ENCODE measurements at regions of chr1 and their contacts with region 1.

Region 1: GRCh38 chr1:212455803-212456528 is 23.2 kb downstream of the NENF start:
- H3K4me3 ChIP-seq: no peak overlapping the region
- H3K27ac ChIP-seq: no peak overlapping the region
- H3K4me1 ChIP-seq: no peaks in the 10 kb centered on the region
- CTCF ChIP-seq: peak; percentile 78

Region 2: DNA sequence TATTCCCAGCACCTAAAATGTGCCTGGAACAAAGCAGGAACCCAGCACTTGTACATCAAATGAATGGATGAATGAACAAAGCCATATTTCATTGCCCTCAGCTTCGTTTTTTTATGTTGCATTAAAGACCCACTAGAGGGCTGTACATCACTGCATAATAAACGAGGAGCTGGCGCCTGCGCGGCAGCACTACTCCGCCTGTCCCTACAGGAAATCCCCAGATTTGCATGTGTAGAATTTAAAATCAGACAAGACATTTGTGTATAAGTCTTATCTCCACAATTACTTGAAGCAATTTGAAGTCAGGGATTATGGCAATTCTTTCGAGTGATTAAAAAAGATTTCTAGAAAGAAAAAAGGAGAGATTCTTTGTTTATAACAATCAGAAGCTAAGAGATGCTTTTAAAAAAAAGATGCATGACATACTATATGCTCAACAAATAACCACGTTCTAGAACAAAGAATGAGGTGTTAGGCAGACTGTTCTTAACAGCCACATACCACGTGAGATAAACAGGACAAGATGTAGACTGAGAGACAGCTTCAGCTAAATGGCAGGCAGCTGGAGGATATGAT is 775.1 kb before region 1 on chr1:
- CTCF ChIA-PET with region 1: interaction called, 49 read pairs
- POLR2A ChIA-PET with region 1: interaction called, 8 read pairs
- H3K4me3 ChIP-seq: no peak overlapping the region
- H3K27ac ChIP-seq: no peak overlapping the region
- H3K4me1 ChIP-seq: no peaks in the 10 kb centered on the region
- CTCF ChIP-seq: peak; percentile 78

Region 3: DNA sequence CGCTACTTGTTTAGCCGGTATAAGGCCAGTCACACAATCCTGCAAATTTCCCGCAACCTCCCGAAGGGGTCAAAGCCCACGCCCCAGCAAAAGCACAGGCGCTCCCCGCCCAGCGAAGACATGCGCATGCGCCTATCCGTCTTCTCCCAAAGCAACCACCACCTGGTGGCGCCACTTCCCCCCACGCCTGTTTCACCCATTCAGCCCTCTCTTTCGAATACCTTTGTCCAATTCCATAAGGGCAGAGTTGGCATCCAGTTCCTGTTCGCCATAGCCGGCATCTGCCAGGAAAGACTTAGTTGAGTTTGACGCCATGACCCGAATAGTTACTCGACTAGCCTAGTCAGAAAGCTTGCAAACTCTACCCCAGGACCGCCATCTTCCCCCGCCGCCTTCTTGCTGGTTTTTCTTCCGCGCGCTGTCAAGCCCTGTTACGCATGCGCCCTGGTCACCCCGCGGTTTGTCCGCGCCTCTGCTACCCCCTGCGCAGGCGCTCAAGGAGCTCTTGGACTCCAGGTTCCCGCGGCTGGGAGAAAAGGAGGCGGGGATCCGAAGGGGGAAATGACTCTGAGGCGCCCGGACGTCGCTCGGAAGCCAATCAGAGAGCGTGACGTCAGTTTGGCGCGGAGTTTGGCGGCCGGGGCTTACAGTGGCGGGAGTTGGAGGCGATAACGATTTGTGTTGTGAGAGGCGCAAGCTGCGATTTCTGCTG is 420.7 kb before region 1 on chr1 and contains the starts of genes DTL and INTS7:
- CTCF ChIA-PET with region 1: interaction called, 14 read pairs
- POLR2A ChIA-PET with region 1: interaction called, 3 read pairs
- H3K4me3 ChIP-seq: peak within 1 kb of the TSS; percentile 91
- H3K27ac ChIP-seq: peak within 1 kb of the TSS; percentile 68
- H3K4me1 ChIP-seq: peaks cover 3% of the 10 kb centered on the region; the same call in 1 of the 2 replicates
- CTCF ChIP-seq: peak; percentile 100

Region 4: DNA sequence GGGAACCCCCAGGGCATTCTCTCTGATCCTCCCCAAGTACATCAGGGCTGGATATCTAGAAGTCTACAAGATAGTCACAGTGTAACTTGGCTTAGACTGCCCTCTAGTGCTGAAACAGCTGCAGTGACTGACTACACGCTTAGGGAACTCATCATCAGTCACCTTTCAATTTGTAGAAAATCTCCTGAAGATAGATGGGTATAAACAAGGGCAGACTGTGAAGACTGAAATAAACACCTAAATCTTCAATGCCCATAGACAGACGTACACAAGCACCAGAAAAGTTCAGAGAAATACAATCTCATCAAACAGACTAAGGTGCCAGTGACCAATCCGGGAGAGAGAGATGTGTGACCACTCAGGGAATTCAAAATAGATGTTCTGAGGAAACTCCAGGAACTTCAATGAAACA is 87.9 kb before region 1 on chr1:
- CTCF ChIA-PET with region 1: interaction called, 46 read pairs
- POLR2A ChIA-PET with region 1: interaction called, 6 read pairs
- H3K4me3 ChIP-seq: no peak overlapping the region
- H3K27ac ChIP-seq: no peak overlapping the region
- H3K4me1 ChIP-seq: no peaks in the 10 kb centered on the region
- CTCF ChIP-seq: no peak

Region 5: DNA sequence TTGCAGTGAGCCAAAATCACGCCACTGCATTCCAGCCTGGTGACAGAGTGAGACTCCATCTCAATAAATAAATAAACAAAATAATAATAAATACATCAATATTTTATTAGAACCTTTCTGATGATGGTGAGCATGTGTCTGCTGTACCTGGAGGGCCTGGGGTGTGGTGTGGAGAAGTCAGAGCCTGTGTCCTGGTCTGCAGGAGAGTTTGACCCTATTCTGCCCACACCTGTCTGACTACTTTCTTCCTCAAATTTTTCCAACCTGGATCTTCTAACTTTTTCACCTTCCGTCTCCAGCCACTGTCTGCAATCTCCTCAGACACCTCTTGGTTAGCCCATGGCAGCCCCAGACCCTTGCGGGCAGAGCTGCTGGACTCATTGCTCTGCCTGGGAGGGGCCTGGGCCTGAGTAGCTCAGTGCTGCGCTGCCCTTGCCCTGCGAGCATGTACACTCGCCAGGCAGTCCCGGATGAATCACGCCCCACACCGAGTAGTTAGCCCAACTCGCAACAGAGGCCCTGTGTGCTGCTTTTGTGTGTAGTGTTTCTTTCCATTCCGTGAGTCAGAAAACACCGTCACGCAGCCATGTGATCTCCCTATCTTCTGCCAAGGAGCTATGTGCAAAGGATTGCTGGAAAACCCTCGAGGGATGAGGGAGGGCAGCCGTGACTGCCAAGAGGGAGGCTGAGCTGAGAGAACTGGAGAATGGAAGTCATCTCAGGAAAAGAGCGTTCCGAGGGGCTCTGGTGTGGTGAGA is 13.9 kb after region 1 on chr1:
- CTCF ChIA-PET with region 1: interaction called, 17 read pairs
- POLR2A ChIA-PET with region 1: no interaction called
- H3K4me3 ChIP-seq: no peak overlapping the region
- H3K27ac ChIP-seq: no peak overlapping the region
- H3K4me1 ChIP-seq: no peaks in the 10 kb centered on the region
- CTCF ChIP-seq: no peak

Region 6: DNA sequence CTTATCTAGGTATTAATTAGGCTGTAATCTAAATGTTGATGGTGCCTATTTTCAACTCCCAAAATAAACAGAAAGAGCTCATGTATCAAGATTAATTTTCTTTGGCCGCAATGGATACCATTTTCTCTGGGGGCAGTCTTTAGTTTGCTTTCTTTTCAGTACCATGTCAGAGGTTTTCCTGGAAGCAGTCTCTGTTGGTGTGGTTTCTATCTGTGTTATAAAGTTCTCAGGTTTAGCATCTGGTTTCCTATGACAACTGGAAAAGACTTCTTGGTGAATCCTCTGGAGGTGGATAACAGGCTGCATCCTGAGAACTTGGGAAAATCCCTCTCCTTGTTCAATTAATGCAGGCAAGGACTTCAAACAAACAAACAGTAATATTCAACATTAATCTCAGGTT is 282.4 kb after region 1 on chr1:
- CTCF ChIA-PET with region 1: interaction called, 11 read pairs
- POLR2A ChIA-PET with region 1: no interaction called
- H3K4me3 ChIP-seq: no peak overlapping the region
- H3K27ac ChIP-seq: no peak overlapping the region
- H3K4me1 ChIP-seq: no peaks in the 10 kb centered on the region
- CTCF ChIP-seq: no peak